ENCODE measurements at regions of chr2 and their contacts with region 1.

Region 1: DNA sequence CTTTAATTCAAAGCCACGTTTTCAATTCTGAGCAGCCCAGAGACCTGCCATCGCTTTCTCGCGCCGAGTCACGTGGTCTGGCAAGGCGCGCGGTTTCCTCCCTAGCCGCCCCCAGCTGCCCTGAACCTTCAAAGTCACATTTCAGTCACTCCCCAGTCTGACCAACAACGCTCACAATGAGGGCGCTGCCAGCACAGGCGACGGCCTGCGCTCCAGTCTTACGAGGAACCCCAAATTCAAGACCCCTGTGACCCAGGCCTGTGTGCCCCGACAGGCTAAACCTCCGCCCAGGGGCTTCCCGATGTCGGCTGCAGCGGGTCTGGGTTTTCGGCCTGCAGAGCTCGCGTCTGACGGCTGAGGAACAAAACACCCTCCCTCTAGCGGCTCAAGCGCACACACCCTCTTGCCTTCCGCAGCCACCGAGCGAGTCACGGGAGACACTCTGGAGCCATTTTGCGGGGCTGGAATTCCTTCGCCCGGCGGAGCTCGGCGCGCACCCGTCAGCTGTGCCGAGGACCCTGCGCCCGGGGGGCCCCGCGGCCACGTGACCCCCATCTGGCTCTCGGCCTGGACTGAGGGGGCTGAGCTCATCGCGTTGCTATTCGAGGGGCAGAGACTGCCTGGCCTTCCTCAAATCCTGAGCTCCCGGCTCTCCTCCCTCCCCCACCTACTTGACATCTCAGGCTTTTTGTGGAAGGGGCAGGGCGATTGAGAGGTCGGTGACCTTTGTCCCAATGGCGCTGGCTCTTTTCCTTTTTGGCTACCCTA is 69.9 kb upstream of the ITGB6 start:
- DNase-seq: peak; percentile 90 to 92
- H3K4me3 ChIP-seq: peak overlapping the region; percentile 65
- H3K4me3 Mint-ChIP-seq: peak overlapping the region; percentile 92
- H3K27ac Mint-ChIP-seq: peak overlapping the region; percentile 98
- H3K4me1 ChIP-seq: peaks cover 29% of the 10 kb centered on the region
- H3K4me1 Mint-ChIP-seq: peaks cover 13% of the 10 kb centered on the region
- H3K27me3 ChIP-seq: no peaks in the 10 kb centered on the region
- H3K27me3 Mint-ChIP-seq: no peaks in the 10 kb centered on the region
- CTCF ChIP-seq: peak; percentile 48 to 82

Region 2: DNA sequence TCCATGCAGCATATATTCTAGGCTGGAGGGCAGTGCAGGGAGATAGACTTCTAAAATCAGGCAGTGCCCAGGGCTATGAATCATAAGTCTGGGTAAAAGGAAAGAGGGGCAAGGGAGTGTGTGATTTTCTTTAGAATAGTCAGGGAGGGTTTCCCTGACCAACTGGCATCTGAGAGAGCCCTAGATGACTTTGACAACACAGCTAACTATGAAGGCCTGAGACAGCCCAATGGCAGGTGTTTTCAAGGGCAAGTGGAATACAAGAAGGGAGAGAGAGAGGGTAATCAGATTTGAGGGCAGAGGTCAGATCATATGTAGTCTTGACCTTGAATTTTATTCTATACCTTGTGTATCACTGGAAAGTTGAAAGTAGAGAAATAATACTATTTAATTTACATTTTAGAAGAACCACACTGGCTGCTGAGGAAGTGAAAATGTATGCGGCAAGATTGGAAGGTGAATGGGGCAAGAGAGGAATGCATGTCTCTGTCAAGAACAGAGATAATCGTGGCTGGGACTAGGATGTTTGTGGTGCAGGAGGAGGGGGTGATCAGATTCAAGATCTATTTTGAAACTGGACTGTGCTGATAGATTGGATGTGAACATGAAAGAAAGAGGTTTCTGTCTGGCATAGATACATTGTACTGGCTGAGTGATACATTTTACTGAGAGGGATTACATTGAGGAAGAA is 68.0 kb before region 1 on chr2:
- CTCF ChIA-PET with region 1: no interaction called
- POLR2A ChIA-PET with region 1: no interaction called
- intact Hi-C with region 1: no loop called
- DNase-seq: no peak
- H3K4me3 ChIP-seq: no peak overlapping the region
- H3K4me3 Mint-ChIP-seq: no peak overlapping the region
- H3K27ac Mint-ChIP-seq: no peak overlapping the region
- H3K4me1 ChIP-seq: no peaks in the 10 kb centered on the region
- H3K4me1 Mint-ChIP-seq: peaks cover 11% of the 10 kb centered on the region
- H3K27me3 ChIP-seq: no peaks in the 10 kb centered on the region
- H3K27me3 Mint-ChIP-seq: no peaks in the 10 kb centered on the region
- CTCF ChIP-seq: no peak

Region 3: DNA sequence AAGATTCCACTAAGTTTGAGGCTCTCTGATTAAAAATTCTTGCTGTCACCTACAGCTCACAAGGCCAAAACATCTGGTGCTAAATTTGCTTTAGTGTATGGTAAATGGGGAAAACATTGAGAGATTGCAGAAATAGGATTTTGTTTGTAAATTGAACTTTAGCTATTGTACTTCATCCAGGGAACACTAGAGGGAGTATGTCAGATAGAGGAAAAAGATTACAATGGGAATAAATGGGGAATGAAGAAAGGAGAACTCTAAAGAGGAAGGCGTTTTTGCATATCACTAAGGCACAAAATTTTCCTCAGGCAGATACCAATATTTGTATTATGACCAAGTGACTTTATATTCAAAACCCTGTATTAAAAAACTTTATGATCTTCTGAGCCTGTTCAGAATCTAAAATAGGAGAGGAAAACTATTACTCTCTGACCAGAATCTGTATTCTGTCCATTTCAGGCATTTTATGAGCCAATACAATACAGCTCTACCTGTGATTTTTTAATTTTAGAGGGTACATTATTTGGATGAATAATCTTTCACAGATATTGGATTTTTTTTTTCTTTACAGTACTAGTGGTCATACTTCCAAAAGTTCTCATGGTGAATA is 17.6 kb before region 1 on chr2:
- CTCF ChIA-PET with region 1: interaction called, 11 read pairs
- POLR2A ChIA-PET with region 1: interaction called, 6 read pairs
- intact Hi-C with region 1: loop called (anchors 1 kb)
- DNase-seq: peak in 1 of 2 experiments; percentile 31
- H3K4me3 ChIP-seq: no peak overlapping the region
- H3K4me3 Mint-ChIP-seq: no peak overlapping the region
- H3K27ac Mint-ChIP-seq: no peak overlapping the region
- H3K4me1 ChIP-seq: peaks cover 15% of the 10 kb centered on the region; the same call in 1 of the 2 replicates
- H3K4me1 Mint-ChIP-seq: peaks cover 7% of the 10 kb centered on the region
- H3K27me3 ChIP-seq: no peaks in the 10 kb centered on the region
- H3K27me3 Mint-ChIP-seq: no peaks in the 10 kb centered on the region
- CTCF ChIP-seq: peak; percentile 75 to 80

Region 4: GRCh38 chr2:160367887-160368286 is 97.9 kb after region 1 on chr2:
- CTCF ChIA-PET with region 1: no interaction called
- POLR2A ChIA-PET with region 1: no interaction called
- intact Hi-C with region 1: no loop called
- DNase-seq: no peak
- H3K4me3 ChIP-seq: no peak overlapping the region
- H3K4me3 Mint-ChIP-seq: no peak overlapping the region
- H3K27ac Mint-ChIP-seq: no peak overlapping the region
- H3K4me1 ChIP-seq: peaks cover 21% of the 10 kb centered on the region
- H3K4me1 Mint-ChIP-seq: peaks cover 27% of the 10 kb centered on the region
- H3K27me3 ChIP-seq: no peaks in the 10 kb centered on the region
- H3K27me3 Mint-ChIP-seq: no peaks in the 10 kb centered on the region
- CTCF ChIP-seq: no peak

Region 5: DNA sequence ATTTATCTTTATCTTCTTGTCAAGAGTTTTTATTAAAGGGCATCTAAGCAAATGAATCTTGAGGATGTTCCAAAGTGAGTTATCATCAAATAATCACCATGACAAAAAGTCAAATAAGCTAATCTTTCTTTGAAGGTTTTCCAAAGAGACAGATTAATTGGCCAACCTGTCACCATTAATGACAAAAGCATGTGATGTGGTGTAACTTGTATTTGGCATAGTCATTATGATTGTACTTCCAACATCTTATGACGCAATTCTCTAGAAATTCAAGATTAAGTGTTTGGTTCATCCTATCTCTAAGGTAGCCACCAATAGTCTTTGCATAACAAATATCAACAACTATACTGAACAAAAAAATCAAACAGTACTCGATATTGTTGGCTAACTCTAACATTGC is 195.0 kb after region 1 on chr2:
- CTCF ChIA-PET with region 1: no interaction called
- POLR2A ChIA-PET with region 1: no interaction called
- intact Hi-C with region 1: no loop called
- DNase-seq: no peak
- H3K4me3 ChIP-seq: no peak overlapping the region
- H3K4me3 Mint-ChIP-seq: no peak overlapping the region
- H3K27ac Mint-ChIP-seq: no peak overlapping the region
- H3K4me1 ChIP-seq: no peaks in the 10 kb centered on the region
- H3K4me1 Mint-ChIP-seq: peaks cover 20% of the 10 kb centered on the region
- H3K27me3 ChIP-seq: no peaks in the 10 kb centered on the region
- H3K27me3 Mint-ChIP-seq: no peaks in the 10 kb centered on the region
- CTCF ChIP-seq: no peak